Endothelial cell of umbilical vein (primary cell): ENCODE measurements at regions of chr15 and their contacts with region 1.

Region 1: GRCh38 chr15:65184868-65185738 is at the start of gene CLPX:
- DNase-seq: peak; percentile 94
- H3K4me3 ChIP-seq: peak within 1 kb of the TSS; percentile 94 to 96 (median 96)
- H3K27ac ChIP-seq: peak within 1 kb of the TSS; percentile 73
- H3K4me1 ChIP-seq: peaks cover 9% of the 10 kb centered on the region
- H3K27me3 ChIP-seq: no peaks in the 10 kb centered on the region
- CTCF ChIP-seq: no peak
- POLR2A ChIP-seq: peak; percentile 47
- total RNA-seq, gene CLPX: 41.4 and 41.8 TPM in 2 replicates

Region 2: DNA sequence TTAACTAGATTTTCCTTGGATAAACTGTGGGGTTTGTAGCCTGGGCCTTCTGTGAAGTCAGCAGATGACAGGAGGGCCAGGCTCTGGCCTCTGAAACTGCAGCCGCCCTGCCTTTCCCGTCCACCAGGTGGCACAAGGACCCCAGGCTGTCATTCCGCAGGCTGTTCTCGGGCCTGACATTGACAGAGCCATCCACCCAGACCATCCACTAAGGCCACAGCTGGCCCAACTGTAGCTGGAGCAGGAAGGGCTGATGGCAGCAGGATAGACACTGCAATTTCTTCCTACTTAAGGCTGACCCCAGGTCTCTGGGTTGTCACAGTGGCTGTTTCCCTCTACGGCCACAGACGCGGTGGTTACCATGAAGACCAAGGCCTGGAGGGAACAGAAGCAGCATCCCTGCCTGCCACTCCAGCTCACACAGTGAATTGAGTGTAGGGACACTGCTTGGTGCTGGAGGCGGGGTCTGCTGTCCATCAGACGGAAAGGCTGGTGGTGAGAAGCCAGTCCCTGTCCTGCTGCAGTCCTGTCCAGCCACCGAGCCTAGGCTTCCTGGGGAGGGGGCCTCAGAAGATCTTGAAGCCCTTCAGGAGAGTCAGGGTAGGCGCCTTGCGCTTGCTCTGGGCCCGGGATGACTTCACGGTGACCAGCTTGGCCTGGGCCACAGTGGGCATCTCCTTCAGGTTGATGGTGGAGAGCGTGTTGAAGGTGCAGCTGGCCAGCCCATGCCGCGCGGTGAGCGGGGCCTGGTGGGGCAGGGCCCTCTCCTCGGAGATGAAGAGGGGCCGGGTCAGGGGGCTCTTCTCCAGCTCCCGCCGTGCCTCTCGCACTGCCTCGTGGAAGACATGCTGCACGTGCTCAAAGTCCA is 130.5 kb before region 1 on chr15:
- CTCF ChIA-PET with region 1: interaction called, 4 read pairs
- POLR2A ChIA-PET with region 1: no interaction called
- dilution Hi-C with region 1: no loop called
- intact Hi-C with region 1: loop called (anchors 2 kb)
- DNase-seq: peak; percentile 61
- H3K4me3 ChIP-seq: no peak overlapping the region
- H3K27ac ChIP-seq: no peak overlapping the region
- H3K4me1 ChIP-seq: peaks cover 9% of the 10 kb centered on the region
- H3K27me3 ChIP-seq: no peaks in the 10 kb centered on the region
- CTCF ChIP-seq: peak; percentile 91 to 96
- POLR2A ChIP-seq: no peak

Region 3: DNA sequence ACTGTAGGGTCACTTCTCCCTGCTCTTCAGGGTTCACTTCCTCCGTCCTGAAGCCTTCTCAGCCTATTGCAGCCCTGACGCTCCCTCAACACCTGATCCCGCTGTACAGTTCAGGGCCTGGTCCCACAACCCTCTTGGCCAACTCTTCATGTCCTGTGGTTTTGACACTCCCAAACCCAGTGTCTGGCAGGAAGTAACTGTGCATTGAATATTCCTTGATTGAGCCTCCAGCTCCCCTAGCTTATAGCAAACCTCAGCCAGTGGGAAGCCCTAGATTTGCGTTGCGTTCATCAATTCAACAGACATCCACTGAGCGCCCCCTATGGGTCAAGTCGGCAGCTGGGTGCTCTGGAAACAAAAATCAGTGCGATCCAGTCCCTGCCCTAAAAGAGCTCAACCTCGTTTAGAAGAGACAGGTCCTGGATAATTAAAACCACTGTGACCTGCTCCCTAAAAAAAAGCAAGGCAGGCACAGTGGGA is 83.7 kb before region 1 on chr15:
- CTCF ChIA-PET with region 1: no interaction called
- POLR2A ChIA-PET with region 1: no interaction called
- dilution Hi-C with region 1: no loop called
- intact Hi-C with region 1: no loop called
- DNase-seq: peak; percentile 53
- H3K4me3 ChIP-seq: peak overlapping the region in 1 of 3 experiments; percentile 13
- H3K27ac ChIP-seq: no peak overlapping the region
- H3K4me1 ChIP-seq: peaks cover 2% of the 10 kb centered on the region
- H3K27me3 ChIP-seq: no peaks in the 10 kb centered on the region
- CTCF ChIP-seq: peak; percentile 82 to 87
- POLR2A ChIP-seq: no peak

Region 4: DNA sequence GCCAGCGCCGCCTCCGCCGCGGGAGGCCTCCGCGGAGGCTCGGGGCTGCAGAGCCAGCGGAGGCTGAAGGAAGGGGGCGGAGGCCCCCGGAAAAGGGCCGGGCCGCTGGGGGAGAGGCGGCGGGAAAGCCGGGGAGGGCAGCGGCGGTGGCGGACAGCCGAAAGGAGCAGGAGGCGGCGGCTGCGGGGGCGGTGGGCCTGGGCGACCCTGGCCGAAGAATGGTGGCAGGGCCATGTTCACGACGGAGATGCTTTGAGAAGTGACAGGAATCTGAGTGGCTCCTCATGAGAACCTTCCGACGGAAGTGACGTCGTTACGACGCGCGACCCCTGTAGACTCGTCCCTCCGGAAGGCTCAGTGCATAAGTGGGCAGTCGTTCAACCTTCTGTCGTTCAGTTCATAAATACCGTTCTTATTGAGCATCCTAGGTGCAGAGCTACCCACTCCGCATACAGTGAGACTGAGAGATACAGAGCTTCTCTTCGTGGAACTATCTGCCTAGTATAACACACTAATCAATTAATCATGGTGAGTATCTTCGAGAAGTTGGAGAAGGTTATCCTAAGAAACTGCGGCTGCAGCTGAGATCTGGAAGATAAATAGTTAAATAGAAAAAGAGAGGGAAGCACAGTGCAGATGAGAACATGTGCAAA is 51.4 kb before region 1 on chr15 and contains the start of gene PDCD7:
- CTCF ChIA-PET with region 1: no interaction called
- POLR2A ChIA-PET with region 1: interaction called, 12 read pairs
- dilution Hi-C with region 1: no loop called
- intact Hi-C with region 1: loop called (anchors 1 kb)
- DNase-seq: peak; percentile 89
- H3K4me3 ChIP-seq: peak within 1 kb of the TSS; percentile 29 to 94 (median 72)
- H3K27ac ChIP-seq: peak within 1 kb of the TSS; percentile 46
- H3K4me1 ChIP-seq: peaks cover 10% of the 10 kb centered on the region
- H3K27me3 ChIP-seq: no peaks in the 10 kb centered on the region
- CTCF ChIP-seq: no peak
- POLR2A ChIP-seq: peak; percentile 91
- total RNA-seq, gene PDCD7: 19.5 and 26.6 TPM in 2 replicates

Region 5: DNA sequence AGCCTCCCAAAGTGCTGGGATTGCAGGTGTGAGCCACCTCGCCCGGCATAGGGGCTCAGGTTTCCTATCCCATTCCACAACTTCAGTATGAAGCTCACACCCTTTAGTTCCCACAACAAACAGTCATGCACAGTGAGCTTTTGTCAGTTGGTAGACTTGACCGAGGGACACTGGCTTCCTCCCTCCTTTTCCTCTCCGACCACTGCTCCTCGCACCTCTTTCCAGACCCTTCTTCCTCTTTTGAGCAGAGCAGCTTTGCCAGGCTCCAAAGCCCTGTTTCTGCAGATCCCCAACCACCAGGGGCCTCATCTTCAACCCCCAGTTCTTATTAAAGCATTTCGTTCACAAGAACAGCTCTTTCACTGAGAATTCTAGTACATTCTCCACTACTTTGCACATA is 38.9 kb after region 1 on chr15:
- CTCF ChIA-PET with region 1: no interaction called
- POLR2A ChIA-PET with region 1: no interaction called
- dilution Hi-C with region 1: no loop called
- intact Hi-C with region 1: no loop called
- DNase-seq: no peak
- H3K4me3 ChIP-seq: no peak overlapping the region
- H3K27ac ChIP-seq: no peak overlapping the region
- H3K4me1 ChIP-seq: no peaks in the 10 kb centered on the region
- H3K27me3 ChIP-seq: peaks cover 0 to 4% of the 10 kb centered on the region in 2 experiments
- CTCF ChIP-seq: no peak
- POLR2A ChIP-seq: no peak

Region 6: DNA sequence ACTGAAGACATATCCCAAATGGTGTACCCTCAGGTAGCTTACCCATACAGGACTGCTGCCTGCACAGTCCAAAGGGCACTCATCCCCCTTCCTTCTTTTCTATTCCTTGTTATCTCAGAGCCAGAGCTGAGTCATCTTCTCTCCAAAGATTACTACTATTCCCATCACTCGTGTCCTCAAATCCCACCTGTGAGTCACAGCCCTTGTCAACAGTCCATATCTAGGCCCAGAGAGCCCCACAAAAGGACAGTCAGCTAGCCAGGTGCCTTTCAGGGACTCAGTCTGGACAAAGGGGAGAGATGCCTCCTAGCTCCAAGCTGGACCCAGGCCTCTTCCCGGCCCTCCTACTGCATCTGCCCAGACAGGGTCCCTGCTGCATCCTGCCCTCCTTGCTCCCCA is 90.6 kb after region 1 on chr15:
- CTCF ChIA-PET with region 1: interaction called, 15 read pairs
- POLR2A ChIA-PET with region 1: no interaction called
- dilution Hi-C with region 1: no loop called
- intact Hi-C with region 1: loop called (anchors 1 kb)
- DNase-seq: no peak
- H3K4me3 ChIP-seq: no peak overlapping the region
- H3K27ac ChIP-seq: no peak overlapping the region
- H3K4me1 ChIP-seq: no peaks in the 10 kb centered on the region
- H3K27me3 ChIP-seq: no peaks in the 10 kb centered on the region
- CTCF ChIP-seq: no peak
- POLR2A ChIP-seq: no peak

Region 7: DNA sequence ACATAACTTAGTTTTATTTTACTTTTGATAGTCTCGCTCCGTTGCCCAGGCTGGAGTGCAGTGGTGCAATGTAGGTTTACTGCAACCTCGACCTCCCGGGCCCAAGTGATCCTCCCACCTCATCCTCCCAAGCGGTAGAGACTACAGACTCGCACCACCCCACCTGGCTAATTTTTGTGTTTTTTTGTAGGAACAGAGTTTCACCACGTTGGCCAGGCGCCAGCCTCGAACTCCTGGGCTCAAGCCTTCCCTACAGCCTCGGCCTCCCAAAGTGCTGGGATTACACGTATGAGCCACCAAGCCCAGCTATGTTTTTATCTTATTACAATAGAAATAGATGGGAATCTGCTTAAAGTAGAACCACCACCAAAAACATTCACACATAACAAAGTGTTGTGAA is 113.6 kb after region 1 on chr15:
- CTCF ChIA-PET with region 1: interaction called, 57 read pairs
- POLR2A ChIA-PET with region 1: interaction called, 5 read pairs
- dilution Hi-C with region 1: no loop called
- intact Hi-C with region 1: loop called (anchors 1 kb)
- DNase-seq: no peak
- H3K4me3 ChIP-seq: no peak overlapping the region
- H3K27ac ChIP-seq: no peak overlapping the region
- H3K4me1 ChIP-seq: peaks cover 8% of the 10 kb centered on the region
- H3K27me3 ChIP-seq: no peaks in the 10 kb centered on the region
- CTCF ChIP-seq: no peak
- POLR2A ChIP-seq: no peak

Region 8: GRCh38 chr15:65304389-65305144 is 119.5 kb after region 1 on chr15 and contains the start of gene RNU5B-1:
- CTCF ChIA-PET with region 1: interaction called, 4 read pairs
- POLR2A ChIA-PET with region 1: interaction called, 19 read pairs
- dilution Hi-C with region 1: no loop called
- intact Hi-C with region 1: loop called (anchors 2 kb)
- DNase-seq: peak; percentile 92
- H3K4me3 ChIP-seq: peak within 1 kb of the TSS; percentile 49 to 82 (median 53)
- H3K27ac ChIP-seq: peak within 1 kb of the TSS; percentile 100
- H3K4me1 ChIP-seq: peaks cover 9% of the 10 kb centered on the region
- H3K27me3 ChIP-seq: peaks cover 0 to 2% of the 10 kb centered on the region in 2 experiments
- CTCF ChIP-seq: peak; percentile 76 to 87
- POLR2A ChIP-seq: peak; percentile 100
- total RNA-seq, gene RNU5B-1: not detected in 2 replicates

Region 9: GRCh38 chr15:65384895-65385858 is 200.1 kb after region 1 on chr15:
- CTCF ChIA-PET with region 1: interaction called, 6 read pairs
- POLR2A ChIA-PET with region 1: no interaction called
- dilution Hi-C with region 1: no loop called
- intact Hi-C with region 1: loop called (anchors 1 kb)
- DNase-seq: peak; percentile 82
- H3K4me3 ChIP-seq: no peak overlapping the region
- H3K27ac ChIP-seq: no peak overlapping the region
- H3K4me1 ChIP-seq: peaks cover 6% of the 10 kb centered on the region
- H3K27me3 ChIP-seq: peaks cover 8 to 13% of the 10 kb centered on the region in 2 experiments
- CTCF ChIP-seq: peak; percentile 96
- POLR2A ChIP-seq: no peak